Endothelial cell of umbilical vein (primary cell): ENCODE measurements at regions of chr17 and their contacts with region 1.

Region 1: DNA sequence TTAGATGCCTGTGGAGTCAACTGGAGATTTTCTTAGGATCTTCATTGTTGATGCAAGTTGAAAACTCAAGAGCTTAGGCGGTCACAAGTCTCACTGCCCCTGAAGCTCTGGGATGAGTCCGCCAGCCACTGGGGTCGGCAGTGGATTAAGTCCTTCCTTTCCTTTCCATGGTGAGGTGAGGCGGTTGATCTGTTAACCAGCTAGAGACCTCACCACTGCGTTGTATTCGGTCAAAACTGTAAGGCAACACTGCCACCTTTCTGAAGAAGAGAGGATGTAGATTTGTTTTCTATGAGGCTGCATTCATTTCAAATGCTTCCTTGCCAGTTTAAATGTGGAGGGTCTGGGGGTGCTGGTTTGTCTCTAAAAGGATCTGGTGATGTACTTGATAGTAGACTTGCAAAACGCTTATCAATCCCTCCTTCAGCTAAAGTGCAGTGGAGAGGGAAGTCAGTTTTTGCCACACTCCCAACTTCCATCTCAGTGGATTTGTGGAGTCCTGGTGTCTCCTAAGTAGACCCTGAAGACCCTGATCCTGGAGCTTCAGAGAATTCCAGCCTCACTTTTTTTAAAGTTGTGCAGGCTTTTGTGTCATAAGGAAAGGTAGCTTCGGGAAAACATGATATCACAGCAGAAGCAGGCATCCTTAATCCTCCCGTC is 1.7 kb downstream of the MYOCD start:
- DNase-seq: peak; percentile 5
- H3K4me3 ChIP-seq: no peak overlapping the region
- H3K27ac ChIP-seq: no peak overlapping the region
- H3K4me1 ChIP-seq: no peaks in the 10 kb centered on the region
- H3K27me3 ChIP-seq: peaks cover 14 to 18% of the 10 kb centered on the region in 2 experiments
- CTCF ChIP-seq: no peak
- POLR2A ChIP-seq: no peak

Region 2: GRCh38 chr17:12242345-12242954 is 425.0 kb before region 1 on chr17:
- CTCF ChIA-PET with region 1: no interaction called
- POLR2A ChIA-PET with region 1: no interaction called
- dilution Hi-C with region 1: no loop called
- intact Hi-C with region 1: no loop called
- DNase-seq: no peak
- H3K4me3 ChIP-seq: no peak overlapping the region
- H3K27ac ChIP-seq: no peak overlapping the region
- H3K4me1 ChIP-seq: no peaks in the 10 kb centered on the region
- H3K27me3 ChIP-seq: no peaks in the 10 kb centered on the region
- CTCF ChIP-seq: no peak
- POLR2A ChIP-seq: no peak

Region 3: GRCh38 chr17:12256380-12256995 is 410.9 kb before region 1 on chr17:
- CTCF ChIA-PET with region 1: interaction called, 12 read pairs
- POLR2A ChIA-PET with region 1: no interaction called
- dilution Hi-C with region 1: no loop called
- intact Hi-C with region 1: loop called (anchors 1 kb)
- DNase-seq: peak; percentile 39
- H3K4me3 ChIP-seq: no peak overlapping the region
- H3K27ac ChIP-seq: no peak overlapping the region
- H3K4me1 ChIP-seq: no peaks in the 10 kb centered on the region
- H3K27me3 ChIP-seq: no peaks in the 10 kb centered on the region
- CTCF ChIP-seq: peak; percentile 51 to 52
- POLR2A ChIP-seq: no peak

Region 4: GRCh38 chr17:12342609-12343435 is 324.6 kb before region 1 on chr17:
- CTCF ChIA-PET with region 1: no interaction called
- POLR2A ChIA-PET with region 1: no interaction called
- dilution Hi-C with region 1: no loop called
- intact Hi-C with region 1: loop called (anchors 5 kb)
- DNase-seq: no peak
- H3K4me3 ChIP-seq: no peak overlapping the region
- H3K27ac ChIP-seq: no peak overlapping the region
- H3K4me1 ChIP-seq: no peaks in the 10 kb centered on the region
- H3K27me3 ChIP-seq: no peaks in the 10 kb centered on the region
- CTCF ChIP-seq: no peak
- POLR2A ChIP-seq: no peak

Region 5: GRCh38 chr17:12395733-12396354 is 271.6 kb before region 1 on chr17:
- CTCF ChIA-PET with region 1: no interaction called
- POLR2A ChIA-PET with region 1: no interaction called
- dilution Hi-C with region 1: no loop called
- intact Hi-C with region 1: loop called (anchors 1 kb)
- DNase-seq: no peak
- H3K4me3 ChIP-seq: no peak overlapping the region
- H3K27ac ChIP-seq: no peak overlapping the region
- H3K4me1 ChIP-seq: no peaks in the 10 kb centered on the region
- H3K27me3 ChIP-seq: no peaks in the 10 kb centered on the region
- CTCF ChIP-seq: peak in 1 of 2 donors; percentile 11
- POLR2A ChIP-seq: no peak

Region 6: GRCh38 chr17:12545877-12546513 is 121.4 kb before region 1 on chr17:
- CTCF ChIA-PET with region 1: no interaction called
- POLR2A ChIA-PET with region 1: no interaction called
- dilution Hi-C with region 1: no loop called
- intact Hi-C with region 1: loop called (anchors 1 kb)
- DNase-seq: peak; percentile 4
- H3K4me3 ChIP-seq: no peak overlapping the region
- H3K27ac ChIP-seq: no peak overlapping the region
- H3K4me1 ChIP-seq: no peaks in the 10 kb centered on the region
- H3K27me3 ChIP-seq: no peaks in the 10 kb centered on the region
- CTCF ChIP-seq: peak; percentile 48 to 53
- POLR2A ChIP-seq: no peak

Region 7: DNA sequence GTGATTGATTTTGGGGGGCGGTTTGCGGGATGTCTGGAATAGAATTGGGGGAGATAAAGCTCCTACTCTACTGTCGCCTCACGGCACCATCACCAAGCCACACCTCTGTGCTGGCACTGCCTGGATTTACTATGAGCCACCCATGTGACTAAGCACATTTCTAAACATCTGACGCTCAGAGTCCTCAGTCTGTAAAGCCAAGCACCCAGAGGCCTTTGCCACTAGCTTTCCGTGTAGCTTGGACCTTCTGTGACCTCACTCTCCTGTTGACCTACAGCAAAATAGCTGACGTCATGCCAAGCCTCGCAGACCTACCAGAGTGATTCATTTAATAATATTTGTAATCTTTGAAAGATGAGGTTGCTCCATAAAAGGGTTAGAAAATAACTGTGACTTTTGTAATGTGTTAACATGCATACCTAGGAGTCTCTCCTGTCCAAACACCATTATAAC is 40.2 kb before region 1 on chr17:
- CTCF ChIA-PET with region 1: no interaction called
- POLR2A ChIA-PET with region 1: no interaction called
- dilution Hi-C with region 1: no loop called
- intact Hi-C with region 1: no loop called
- DNase-seq: no peak
- H3K4me3 ChIP-seq: no peak overlapping the region
- H3K27ac ChIP-seq: no peak overlapping the region
- H3K4me1 ChIP-seq: no peaks in the 10 kb centered on the region
- H3K27me3 ChIP-seq: no peaks in the 10 kb centered on the region
- CTCF ChIP-seq: no peak
- POLR2A ChIP-seq: no peak

Region 8: DNA sequence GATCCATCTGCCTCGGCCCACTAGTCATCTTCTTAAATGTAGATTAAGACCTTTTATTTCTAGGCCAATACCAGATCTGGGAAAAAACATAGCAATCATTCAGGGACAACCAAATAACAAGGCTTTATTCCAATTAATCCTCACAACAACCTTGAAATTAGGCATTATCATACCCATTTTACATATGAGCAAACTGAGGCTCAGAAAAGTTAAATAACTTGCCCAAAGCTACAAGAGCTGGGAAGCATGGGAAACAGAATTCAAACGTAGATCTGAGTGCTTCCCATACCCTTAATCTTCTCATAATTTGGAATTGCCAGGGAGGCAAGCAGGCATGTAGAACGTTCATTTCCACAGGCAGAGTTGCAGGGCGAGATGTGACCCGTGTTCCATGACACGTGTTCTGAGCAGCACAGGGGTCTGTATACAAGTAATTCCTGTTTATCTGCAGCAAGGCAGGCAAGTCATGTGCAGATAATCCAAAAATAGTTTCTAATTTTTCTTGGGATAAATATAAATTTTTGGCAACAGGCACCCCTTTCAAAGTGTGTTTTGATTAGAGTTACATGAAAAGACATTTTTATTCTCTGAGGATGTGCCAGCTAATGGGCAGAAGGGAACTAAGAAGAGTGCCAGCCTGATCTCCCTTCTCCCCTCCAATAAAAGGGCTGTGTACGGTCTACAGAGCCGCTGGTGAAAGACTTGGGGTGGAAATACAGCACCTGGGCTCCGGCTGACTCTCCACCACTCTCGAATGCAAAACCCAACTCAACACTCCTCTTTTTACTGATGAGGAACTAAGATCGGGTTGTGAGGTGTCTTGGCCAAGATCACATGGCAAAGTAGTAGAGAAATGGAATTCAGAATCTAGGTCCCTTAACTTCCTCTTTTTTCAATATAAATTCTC is 29.4 kb before region 1 on chr17:
- CTCF ChIA-PET with region 1: no interaction called
- POLR2A ChIA-PET with region 1: no interaction called
- dilution Hi-C with region 1: no loop called
- intact Hi-C with region 1: no loop called
- DNase-seq: no peak
- H3K4me3 ChIP-seq: no peak overlapping the region
- H3K27ac ChIP-seq: no peak overlapping the region
- H3K4me1 ChIP-seq: no peaks in the 10 kb centered on the region
- H3K27me3 ChIP-seq: no peaks in the 10 kb centered on the region
- CTCF ChIP-seq: no peak
- POLR2A ChIP-seq: no peak